CD8-positive, alpha-beta T cell (primary cell): ENCODE measurements at regions of chr7 and their contacts with region 1.

Region 1: DNA sequence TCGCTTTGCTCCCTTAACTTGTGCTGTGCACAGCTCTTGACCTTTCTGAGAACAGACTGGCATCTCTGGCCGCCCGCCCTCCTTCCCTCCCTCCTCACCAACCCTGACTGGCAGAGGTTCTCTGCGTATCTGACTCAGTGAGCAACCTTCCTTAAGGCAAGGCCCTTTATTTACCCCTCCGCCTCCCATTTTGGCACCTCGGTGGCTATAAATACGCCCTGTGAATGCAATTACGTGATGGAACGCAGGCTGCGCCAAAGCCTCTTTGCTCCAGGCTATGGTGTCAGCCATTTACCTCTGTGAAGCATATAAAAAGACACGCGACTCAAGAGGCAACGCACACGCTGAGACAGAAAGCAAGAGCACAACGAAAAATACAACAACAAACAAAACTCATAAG is 764.3 kb downstream of the SUGCT start:
- DNase-seq: no peak
- ATAC-seq: no peak
- H3K4me3 ChIP-seq: no peak overlapping the region
- H3K4me3 Mint-ChIP-seq: no peak overlapping the region
- H3K27ac ChIP-seq: no peak overlapping the region
- H3K27ac Mint-ChIP-seq: no peak overlapping the region
- H3K4me1 ChIP-seq: no peaks in the 10 kb centered on the region
- H3K4me1 Mint-ChIP-seq: no peaks in the 10 kb centered on the region
- H3K27me3 ChIP-seq: no peaks in the 10 kb centered on the region
- H3K27me3 Mint-ChIP-seq: no peaks in the 10 kb centered on the region
- CTCF ChIP-seq: no peak

Region 2: DNA sequence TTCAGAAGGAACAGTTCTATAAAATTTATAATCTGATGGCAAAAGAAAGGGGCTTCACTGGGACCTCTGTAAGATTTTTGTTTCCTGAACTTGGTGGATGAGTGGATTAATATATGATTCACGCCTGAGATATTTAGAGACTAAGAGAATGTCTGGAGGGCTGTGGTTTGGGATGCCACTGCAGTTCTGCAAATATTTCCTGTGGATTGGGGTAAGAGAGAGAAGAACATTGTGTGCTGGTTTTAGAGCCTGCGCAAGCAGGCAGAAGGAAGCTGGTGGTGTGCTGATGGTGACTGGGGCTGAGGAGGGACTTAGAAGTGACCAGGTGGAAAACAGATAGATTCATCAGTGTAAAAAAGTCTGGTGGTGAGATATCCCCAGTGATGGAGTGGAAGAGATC is 677.3 kb before region 1 on chr7:
- CTCF ChIA-PET with region 1: no interaction called
- POLR2A ChIA-PET with region 1: no interaction called
- intact Hi-C with region 1: no loop called
- DNase-seq: no peak
- ATAC-seq: no peak
- H3K4me3 ChIP-seq: no peak overlapping the region
- H3K4me3 Mint-ChIP-seq: no peak overlapping the region
- H3K27ac ChIP-seq: no peak overlapping the region
- H3K27ac Mint-ChIP-seq: no peak overlapping the region
- H3K4me1 ChIP-seq: no peaks in the 10 kb centered on the region
- H3K4me1 Mint-ChIP-seq: no peaks in the 10 kb centered on the region
- H3K27me3 ChIP-seq: no peaks in the 10 kb centered on the region
- H3K27me3 Mint-ChIP-seq: no peaks in the 10 kb centered on the region
- CTCF ChIP-seq: no peak

Region 3: DNA sequence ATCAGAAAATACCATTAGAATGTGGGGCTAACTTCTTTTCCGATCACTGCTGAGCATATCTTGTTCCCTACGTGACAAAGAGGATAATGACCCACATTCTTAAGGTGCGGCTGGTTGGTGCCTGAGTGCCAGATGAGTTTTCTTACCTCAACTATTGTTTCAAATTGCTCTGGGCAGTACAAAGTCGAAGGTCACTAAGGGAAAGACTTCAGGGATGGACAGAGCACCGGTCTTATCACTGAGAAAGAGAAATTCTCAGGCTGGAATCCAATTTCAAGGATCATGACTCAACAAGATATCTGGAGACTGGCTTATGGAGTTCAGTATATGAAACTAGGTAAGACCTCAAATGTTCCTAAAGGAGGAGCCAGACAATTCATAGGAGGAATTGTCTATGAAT is 15.9 kb after region 1 on chr7:
- CTCF ChIA-PET with region 1: interaction called, 3 read pairs
- POLR2A ChIA-PET with region 1: no interaction called
- intact Hi-C with region 1: loop called in 1 of 2 experiments (anchors 2 kb)
- DNase-seq: no peak
- ATAC-seq: no peak
- H3K4me3 ChIP-seq: no peak overlapping the region
- H3K4me3 Mint-ChIP-seq: no peak overlapping the region
- H3K27ac ChIP-seq: no peak overlapping the region
- H3K27ac Mint-ChIP-seq: no peak overlapping the region
- H3K4me1 ChIP-seq: no peaks in the 10 kb centered on the region
- H3K4me1 Mint-ChIP-seq: no peaks in the 10 kb centered on the region
- H3K27me3 ChIP-seq: no peaks in the 10 kb centered on the region
- H3K27me3 Mint-ChIP-seq: no peaks in the 10 kb centered on the region
- CTCF ChIP-seq: no peak